Posterior vena cava (tissue), 2 donors: ENCODE measurements at regions of chr11 and their contacts with region 1.

Region 1: GRCh38 chr11:128630367-128631230 is 43.2 kb upstream of the ETS1 start:
- DNase-seq: peak; percentile 97

Region 2: GRCh38 chr11:128831174-128832120 is 200.8 kb after region 1 on chr11:
- intact Hi-C with region 1: loop called (anchors 1 to 10 kb)
- DNase-seq: peak; percentile 94